Calu3 (cell line): ENCODE measurements at regions of chr2 and their contacts with region 1.

Region 1: DNA sequence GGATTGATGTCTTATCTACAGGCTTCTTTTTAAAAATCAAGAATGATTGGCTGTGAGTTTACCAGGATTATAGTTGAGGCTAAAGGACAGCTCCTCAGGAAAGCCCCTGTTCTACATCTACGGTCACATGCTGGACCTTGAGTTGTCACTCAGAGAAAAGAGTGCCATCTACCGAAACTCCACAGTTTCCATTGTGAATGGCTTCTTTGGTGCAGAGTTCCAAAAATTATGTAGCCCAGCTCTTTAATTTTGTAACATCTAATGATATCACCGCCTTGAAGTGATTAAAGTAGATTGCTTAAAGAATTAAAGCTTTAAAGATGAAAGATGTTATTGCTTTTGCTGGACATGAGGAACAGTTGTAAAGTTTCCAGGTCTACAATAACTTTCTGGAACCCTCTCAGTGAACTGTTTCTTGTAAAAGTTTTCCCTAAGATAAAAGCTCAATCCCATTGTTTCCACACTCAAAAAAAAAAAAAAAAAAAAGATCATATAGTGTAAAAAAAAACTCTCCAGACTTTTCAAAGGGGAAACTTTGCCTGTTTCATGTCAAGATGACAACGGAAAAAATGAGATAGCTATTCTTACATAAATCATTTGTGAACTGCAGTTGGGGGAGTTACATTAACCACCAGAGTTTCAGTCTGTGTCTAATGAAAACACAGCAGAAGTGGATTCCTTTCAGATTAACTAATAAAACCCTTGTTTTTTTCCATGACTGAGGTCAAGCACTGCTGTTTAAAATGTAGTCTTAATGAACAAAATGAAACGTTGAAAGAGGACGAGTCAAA is 4.3 kb downstream of the COL3A1 start:
- DNase-seq: peak; percentile 11
- H3K4me3 Mint-ChIP-seq: no peak overlapping the region
- H3K27ac Mint-ChIP-seq: no peak overlapping the region
- H3K4me1 Mint-ChIP-seq: no peaks in the 10 kb centered on the region
- H3K27me3 Mint-ChIP-seq: no peaks in the 10 kb centered on the region
- CTCF ChIP-seq: no peak

Region 2: GRCh38 chr2:188524519-188525113 is 453.9 kb before region 1 on chr2:
- CTCF ChIA-PET with region 1: interaction called, 9 read pairs
- intact Hi-C with region 1: loop called (anchors 1 kb)
- DNase-seq: peak; percentile 51
- H3K4me3 Mint-ChIP-seq: no peak overlapping the region
- H3K27ac Mint-ChIP-seq: no peak overlapping the region
- H3K4me1 Mint-ChIP-seq: peaks cover 4% of the 10 kb centered on the region
- H3K27me3 Mint-ChIP-seq: no peaks in the 10 kb centered on the region
- CTCF ChIP-seq: peak; percentile 62

Region 3: DNA sequence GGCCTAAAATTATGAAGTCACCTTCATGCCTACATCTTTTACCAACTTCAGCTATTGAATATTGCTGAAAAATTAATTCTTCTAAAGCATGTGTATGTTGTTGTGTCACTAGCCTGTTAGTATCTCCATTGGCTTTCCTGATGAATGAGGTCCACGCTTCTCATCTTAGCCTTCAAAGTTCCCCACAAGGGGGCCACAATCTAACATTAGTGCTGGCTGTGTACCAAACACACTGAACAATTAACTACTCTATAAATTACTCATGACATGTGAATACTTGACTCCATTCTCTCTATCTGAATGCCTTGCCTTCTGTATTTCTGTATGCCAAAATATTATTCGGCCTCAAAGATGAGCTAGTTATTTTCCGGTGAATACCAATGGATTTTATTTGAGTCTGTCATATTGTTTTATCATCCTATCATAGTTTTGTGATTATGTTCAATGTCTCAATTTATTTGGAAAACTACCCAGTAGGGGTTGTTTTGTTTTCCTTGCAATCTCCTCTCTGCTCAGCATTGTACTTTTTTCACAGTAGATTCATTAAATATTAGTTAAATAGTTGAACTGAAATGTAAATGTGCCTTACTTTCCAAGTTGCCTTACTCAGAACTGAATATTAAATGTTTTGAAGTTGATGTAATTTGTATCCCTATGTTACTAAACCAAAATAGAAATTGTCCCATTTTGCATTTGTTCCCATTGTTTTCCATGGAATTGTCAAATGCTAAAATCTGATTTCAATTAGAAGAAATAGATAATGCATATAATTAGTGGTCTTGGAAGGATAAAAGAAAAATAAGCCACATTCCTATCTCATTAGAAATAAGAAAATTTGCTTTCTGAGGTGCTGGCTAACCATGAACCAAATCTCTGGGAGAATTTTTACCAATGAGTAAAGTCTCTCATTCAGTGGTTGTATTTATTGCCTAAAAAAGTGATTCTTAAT is 212.7 kb before region 1 on chr2:
- CTCF ChIA-PET with region 1: no interaction called
- intact Hi-C with region 1: loop called (anchors 1 kb)
- DNase-seq: peak; percentile 40
- H3K4me3 Mint-ChIP-seq: no peak overlapping the region
- H3K27ac Mint-ChIP-seq: no peak overlapping the region
- H3K4me1 Mint-ChIP-seq: no peaks in the 10 kb centered on the region
- H3K27me3 Mint-ChIP-seq: no peaks in the 10 kb centered on the region
- CTCF ChIP-seq: no peak